ENCODE measurements at regions of chr22 and their contacts with region 1.

Region 1: GRCh38 chr22:18077639-18078328 is at the start of gene PEX26:
- DNase-seq: peak; percentile 94 to 98 (median 97)
- ATAC-seq: peak; percentile 98
- H3K4me3 ChIP-seq: peak within 1 kb of the TSS; percentile 85
- H3K27ac ChIP-seq: peak within 1 kb of the TSS; percentile 93
- H3K4me1 ChIP-seq: no peaks in the 10 kb centered on the region
- H3K27me3 ChIP-seq: no peaks in the 10 kb centered on the region
- total RNA-seq, gene PEX26: 19.5 to 23.5 (median 23.3) TPM

Region 2: DNA sequence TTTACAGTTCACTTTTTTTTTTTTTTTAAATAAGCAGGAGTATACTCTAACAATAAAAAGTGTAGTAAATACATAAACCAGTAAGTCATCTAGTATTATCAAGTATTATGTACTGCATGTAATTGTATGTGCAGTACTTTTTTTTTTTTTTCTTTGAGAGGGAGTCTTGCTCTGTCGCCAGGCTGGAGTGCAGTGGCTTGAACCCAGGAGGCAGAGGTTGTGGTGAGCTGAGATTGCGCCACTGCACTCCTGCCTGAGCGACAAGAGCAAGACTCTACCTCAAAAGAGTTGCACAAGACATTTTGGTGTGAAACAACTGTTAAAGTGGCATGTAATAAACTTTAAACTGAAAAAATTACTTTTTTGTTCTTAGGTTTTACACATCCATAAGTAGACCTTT is 422.5 kb before region 1 on chr22:
- intact Hi-C with region 1: no loop called
- DNase-seq: no peak
- ATAC-seq: no peak
- H3K4me3 ChIP-seq: no peak overlapping the region
- H3K27ac ChIP-seq: no peak overlapping the region
- H3K4me1 ChIP-seq: no peaks in the 10 kb centered on the region
- H3K27me3 ChIP-seq: no peaks in the 10 kb centered on the region

Region 3: GRCh38 chr22:17742527-17742902 is 335.3 kb before region 1 on chr22:
- intact Hi-C with region 1: loop called in 1 of 4 experiments (anchors 10 kb)
- DNase-seq: peak; percentile 55 to 75 (median 73)
- ATAC-seq: peak; percentile 40 to 65
- H3K4me3 ChIP-seq: no peak overlapping the region
- H3K27ac ChIP-seq: no peak overlapping the region
- H3K4me1 ChIP-seq: no peaks in the 10 kb centered on the region
- H3K27me3 ChIP-seq: no peaks in the 10 kb centered on the region

Region 4: DNA sequence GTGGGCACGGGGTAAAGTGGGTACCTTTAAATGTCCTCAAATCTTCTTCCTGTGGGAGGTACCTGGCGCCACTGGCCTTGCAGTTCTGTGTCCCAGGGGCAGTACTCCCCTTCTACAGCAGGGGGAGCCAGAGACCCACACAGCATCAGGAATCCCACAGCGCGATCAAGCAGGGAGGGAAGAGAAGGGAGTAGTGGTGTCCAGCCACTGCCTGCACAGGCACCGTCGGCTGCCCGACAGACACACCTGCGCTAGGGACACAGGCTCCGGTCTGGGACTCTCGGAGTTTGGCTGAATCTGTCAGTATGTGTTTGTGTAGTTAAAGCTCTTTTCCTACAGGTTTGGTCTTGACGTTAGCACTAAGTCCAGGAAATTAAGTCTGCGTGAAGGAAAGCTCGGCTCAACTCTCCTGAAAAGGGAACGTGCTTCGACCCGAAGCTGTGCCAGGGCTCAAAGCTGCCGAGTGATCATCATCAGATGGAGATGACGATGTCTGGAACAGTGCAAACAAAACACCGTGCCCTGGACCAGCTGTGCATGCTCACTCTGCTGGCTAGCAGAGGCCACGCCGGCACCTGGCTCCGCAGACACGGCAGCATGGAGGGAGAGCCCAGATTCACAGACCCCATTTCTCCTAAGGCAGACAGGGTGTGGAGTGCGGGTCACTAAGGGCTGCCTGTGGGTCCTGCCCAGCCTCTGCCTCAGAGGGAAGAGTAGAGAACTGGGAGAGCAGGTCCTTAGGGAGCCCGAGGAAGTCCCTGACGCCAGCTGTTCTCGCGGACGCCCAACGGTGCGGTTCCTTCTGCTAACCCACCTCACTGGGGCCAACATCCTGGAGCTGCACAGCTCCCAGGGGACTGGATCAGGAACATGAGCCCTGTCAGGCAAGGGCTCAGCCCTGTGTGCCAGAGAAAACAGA is 247.5 kb before region 1 on chr22:
- intact Hi-C with region 1: loop called (anchors 2 to 5 kb)
- DNase-seq: peak; percentile 81 to 94 (median 90)
- ATAC-seq: peak; percentile 78 to 79
- H3K4me3 ChIP-seq: no peak overlapping the region
- H3K27ac ChIP-seq: no peak overlapping the region
- H3K4me1 ChIP-seq: peaks cover 4% of the 10 kb centered on the region
- H3K27me3 ChIP-seq: no peaks in the 10 kb centered on the region

Region 5: GRCh38 chr22:17903564-17904295 is 174.1 kb before region 1 on chr22:
- intact Hi-C with region 1: loop called in 1 of 4 experiments (anchors 10 kb)
- DNase-seq: peak in 1 of 3 donors; percentile 54
- ATAC-seq: peak; percentile 13 to 38
- H3K4me3 ChIP-seq: no peak overlapping the region
- H3K27ac ChIP-seq: peak overlapping the region; percentile 65
- H3K4me1 ChIP-seq: peaks cover 15% of the 10 kb centered on the region
- H3K27me3 ChIP-seq: no peaks in the 10 kb centered on the region

Region 6: DNA sequence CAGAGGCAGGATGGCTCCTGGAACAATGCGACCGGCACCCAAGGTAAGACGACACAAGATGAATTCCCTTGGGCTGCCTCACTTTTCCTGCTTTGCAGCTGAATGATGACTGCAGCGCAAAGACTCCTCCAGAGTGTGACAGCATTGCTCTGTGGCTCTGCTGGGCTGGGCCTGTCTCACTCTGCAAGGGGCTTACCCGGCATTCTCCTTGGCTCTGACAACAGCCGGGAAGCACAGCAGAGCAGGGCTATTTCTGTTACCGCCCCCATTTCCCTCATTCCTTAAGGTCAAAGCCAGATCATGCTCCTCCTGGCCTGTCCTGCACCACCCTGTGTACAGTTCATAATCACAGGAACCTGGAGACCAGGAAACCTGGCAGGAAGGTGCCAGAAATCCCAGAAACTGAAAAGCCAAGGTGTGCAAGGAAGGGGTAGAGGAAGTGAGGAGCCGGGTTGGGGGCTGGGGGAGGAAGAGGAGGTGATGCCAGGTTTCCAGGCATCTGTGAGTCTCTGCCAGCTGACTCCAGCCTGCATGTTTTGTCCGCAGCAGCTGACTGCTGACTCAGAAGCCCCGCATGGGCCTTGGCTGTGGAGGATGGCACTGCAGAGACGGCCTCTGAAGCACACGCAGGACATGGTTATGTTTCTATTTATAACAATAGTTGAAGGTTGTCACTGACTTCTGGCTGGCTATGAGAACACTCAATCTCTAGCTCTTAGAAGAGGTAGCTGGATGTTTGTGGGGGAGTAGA is 167.0 kb before region 1 on chr22:
- intact Hi-C with region 1: loop called in 2 of 4 experiments (anchors 10 kb)
- DNase-seq: peak; percentile 78 to 88 (median 88)
- ATAC-seq: peak; percentile 90 to 95
- H3K4me3 ChIP-seq: no peak overlapping the region
- H3K27ac ChIP-seq: peak overlapping the region; percentile 95
- H3K4me1 ChIP-seq: peaks cover 24% of the 10 kb centered on the region
- H3K27me3 ChIP-seq: no peaks in the 10 kb centered on the region

Region 7: DNA sequence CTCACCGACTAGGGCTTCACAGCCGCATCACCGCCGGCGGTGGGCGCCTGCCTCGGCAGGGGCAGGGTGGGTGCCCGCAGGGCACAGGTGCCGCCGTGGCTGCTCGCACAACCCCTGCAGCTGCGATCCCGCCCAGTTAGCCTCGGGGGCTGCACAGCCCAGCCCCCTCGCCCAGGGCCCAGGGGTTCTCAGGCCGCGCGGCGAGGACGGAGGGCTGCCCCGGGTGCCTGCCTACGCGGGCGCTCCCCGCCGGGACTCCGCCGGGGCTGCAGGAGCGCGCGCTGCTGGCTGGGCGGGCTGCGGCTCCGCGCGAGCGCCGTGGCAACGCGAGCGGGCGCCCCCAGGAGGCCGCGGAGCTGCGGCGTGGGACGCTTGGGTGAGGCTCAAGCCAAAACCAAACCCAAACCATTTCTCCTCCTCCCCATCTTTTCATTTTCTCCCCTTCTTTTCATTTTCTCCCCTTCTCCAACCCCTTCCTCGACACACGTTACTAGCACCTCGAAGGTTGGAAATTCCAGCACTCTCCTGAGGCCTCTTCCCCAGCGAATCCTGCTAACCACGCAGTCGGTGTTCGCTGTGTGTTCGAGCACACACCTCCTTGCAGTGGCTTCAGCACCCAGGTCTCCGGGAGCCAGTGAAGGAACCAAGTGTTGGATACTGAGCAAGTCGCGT is 53.4 kb before region 1 on chr22 and contains the start of gene MICAL3:
- intact Hi-C with region 1: loop called in 3 of 4 experiments (anchors 10 kb)
- DNase-seq: peak; percentile 65 to 85 (median 84)
- ATAC-seq: peak; percentile 87 to 91
- H3K4me3 ChIP-seq: peak within 1 kb of the TSS; percentile 44
- H3K27ac ChIP-seq: peak within 1 kb of the TSS; percentile 28
- H3K4me1 ChIP-seq: peaks cover 3% of the 10 kb centered on the region
- H3K27me3 ChIP-seq: no peaks in the 10 kb centered on the region
- total RNA-seq, gene MICAL3: 72.1 to 105 (median 79.1) TPM

Region 8: GRCh38 chr22:18145661-18146388 is 68.0 kb after region 1 on chr22:
- intact Hi-C with region 1: no loop called
- DNase-seq: no peak
- ATAC-seq: no peak
- H3K4me3 ChIP-seq: no peak overlapping the region
- H3K27ac ChIP-seq: no peak overlapping the region
- H3K4me1 ChIP-seq: peaks cover 4% of the 10 kb centered on the region
- H3K27me3 ChIP-seq: no peaks in the 10 kb centered on the region